Common myeloid progenitor, CD34-positive (primary cell): ENCODE measurements at regions of chr17 and their contacts with region 1.

Region 1: DNA sequence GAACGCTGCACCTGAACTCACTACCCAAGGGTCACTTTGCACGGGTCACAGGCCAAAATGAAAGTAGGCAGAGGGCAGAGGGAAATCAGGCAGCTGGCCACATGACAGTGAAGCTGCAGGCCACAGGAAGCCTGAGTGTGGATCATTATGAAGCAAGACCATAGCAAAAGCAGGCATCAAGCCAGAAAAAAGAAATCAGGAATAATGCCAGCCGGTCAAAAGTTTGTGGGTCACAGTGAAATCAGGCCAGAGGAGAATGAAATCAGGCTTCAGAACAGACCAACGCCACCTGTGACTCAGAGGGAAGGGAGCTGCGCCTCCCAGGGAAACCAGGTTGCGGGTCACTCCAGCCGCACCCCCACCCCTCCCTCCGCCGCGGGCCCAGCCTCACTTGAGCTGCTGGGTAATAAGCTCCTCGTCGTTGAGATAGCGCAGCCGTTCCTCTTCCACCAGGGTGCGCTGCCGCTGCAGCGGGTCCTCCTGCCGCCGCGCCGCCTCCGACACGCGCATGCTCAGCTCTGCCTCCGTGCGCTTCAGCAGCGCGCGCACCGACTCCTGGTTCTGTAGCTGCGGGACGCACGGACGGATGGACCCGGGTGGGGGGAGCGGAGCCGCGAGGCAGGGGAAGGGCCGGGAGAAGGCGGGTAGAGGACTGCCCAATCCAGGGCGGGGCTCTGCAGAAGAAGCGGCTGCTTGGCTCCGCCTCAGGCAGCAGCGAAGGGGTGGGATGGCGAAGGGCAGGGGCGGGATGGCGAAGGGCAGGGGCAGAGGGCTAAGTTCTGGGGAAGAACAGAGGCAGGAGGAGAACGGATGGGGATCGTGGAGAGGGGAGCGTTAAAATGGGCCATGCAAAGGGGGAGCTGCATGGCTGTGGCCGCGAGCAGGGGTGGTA is 47.7 kb downstream of the SRCIN1 start:
- DNase-seq: peak; percentile 88 to 93 (median 92)
- H3K4me3 ChIP-seq: peak overlapping the region in 6 of 7 experiments; percentile 45 to 68 (median 53)
- H3K27ac ChIP-seq: no peak overlapping the region
- H3K4me1 ChIP-seq: peaks cover 4 to 61% (median 43%) of the 10 kb centered on the region in 4 experiments
- H3K27me3 ChIP-seq: peaks cover 0 to 48% (median 38%) of the 10 kb centered on the region in 5 experiments

Region 2: DNA sequence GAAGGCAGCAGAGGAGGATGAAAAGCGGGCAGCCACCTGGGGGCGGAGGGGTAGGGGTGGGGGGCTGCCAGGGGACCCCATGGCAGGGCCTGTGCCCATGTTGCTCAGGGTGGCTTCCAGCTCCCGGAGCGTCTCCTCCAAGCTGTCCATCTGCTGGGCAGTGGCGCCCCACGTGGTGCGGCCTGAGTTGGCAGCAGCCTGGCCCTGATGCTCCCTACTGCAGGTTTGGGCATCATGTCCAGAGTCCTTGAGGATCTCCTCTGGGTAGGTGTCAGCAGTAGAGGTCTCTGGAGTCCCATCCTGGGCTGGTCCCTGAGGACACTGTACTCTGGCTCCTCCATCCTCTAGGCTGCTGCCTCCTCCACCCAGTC is 13.3 kb before region 1 on chr17:
- CTCF ChIA-PET with region 1: interaction called, 12 read pairs
- POLR2A ChIA-PET with region 1: interaction called, 3 read pairs
- DNase-seq: no peak
- H3K4me3 ChIP-seq: no peak overlapping the region
- H3K27ac ChIP-seq: no peak overlapping the region
- H3K4me1 ChIP-seq: peaks cover 0 to 9% (median under 1%) of the 10 kb centered on the region in 4 experiments
- H3K27me3 ChIP-seq: peaks cover 0 to 10% (median 7%) of the 10 kb centered on the region in 5 experiments

Region 3: GRCh38 chr17:38584350-38584925 is 26.4 kb after region 1 on chr17:
- CTCF ChIA-PET with region 1: interaction called, 62 read pairs
- POLR2A ChIA-PET with region 1: no interaction called
- DNase-seq: peak in 2 of 3 donors; percentile 50 to 60
- H3K4me3 ChIP-seq: no peak overlapping the region
- H3K27ac ChIP-seq: no peak overlapping the region
- H3K4me1 ChIP-seq: peaks cover 0 to 38% (median 27%) of the 10 kb centered on the region in 4 experiments
- H3K27me3 ChIP-seq: peaks cover 0 to 91% (median 35%) of the 10 kb centered on the region in 5 experiments

Region 4: GRCh38 chr17:38605888-38606645 is 48.0 kb after region 1 on chr17 and contains the start of gene SRCIN1:
- CTCF ChIA-PET with region 1: interaction called, 11 read pairs
- POLR2A ChIA-PET with region 1: no interaction called
- DNase-seq: peak in 2 of 3 donors; percentile 40 to 43
- H3K4me3 ChIP-seq: peak within 1 kb of the TSS in 5 of 7 experiments; percentile 26 to 64 (median 33)
- H3K27ac ChIP-seq: no peak within 1 kb of the TSS
- H3K4me1 ChIP-seq: peaks cover 0 to 19% (median 14%) of the 10 kb centered on the region in 4 experiments
- H3K27me3 ChIP-seq: peaks cover 12 to 99% (median 54%) of the 10 kb centered on the region in 5 experiments

Region 5: GRCh38 chr17:38667099-38667786 is 109.2 kb after region 1 on chr17:
- CTCF ChIA-PET with region 1: interaction called, 50 read pairs
- POLR2A ChIA-PET with region 1: no interaction called
- DNase-seq: peak; percentile 69 to 76 (median 74)
- H3K4me3 ChIP-seq: no peak overlapping the region
- H3K27ac ChIP-seq: no peak overlapping the region
- H3K4me1 ChIP-seq: peaks cover 0 to 10% (median 9%) of the 10 kb centered on the region in 4 experiments
- H3K27me3 ChIP-seq: peaks cover 8 to 46% (median 41%) of the 10 kb centered on the region in 5 experiments